ENCODE measurements at regions of chr6 and their contacts with region 1.

Region 1: GRCh38 chr6:140105857-140106256 is 731.4 kb upstream of the CITED2 start:
- DNase-seq: no peak
- H3K4me3 ChIP-seq: no peak overlapping the region
- H3K27ac ChIP-seq: no peak overlapping the region
- H3K4me1 ChIP-seq: no peaks in the 10 kb centered on the region
- H3K27me3 ChIP-seq: no peaks in the 10 kb centered on the region
- CTCF ChIP-seq: peak; percentile 60

Region 2: GRCh38 chr6:141195251-141195832 is 1089.5 kb after region 1 on chr6:
- CTCF ChIA-PET with region 1: no interaction called
- POLR2A ChIA-PET with region 1: interaction called, 42 read pairs
- intact Hi-C with region 1: no loop called
- DNase-seq: no peak
- H3K4me3 ChIP-seq: no peak overlapping the region
- H3K27ac ChIP-seq: no peak overlapping the region
- H3K4me1 ChIP-seq: no peaks in the 10 kb centered on the region
- H3K27me3 ChIP-seq: no peaks in the 10 kb centered on the region
- CTCF ChIP-seq: no peak; the same call in 1 of the 2 replicates